ENCODE measurements at regions of chr2 and their contacts with region 1.

Region 1: DNA sequence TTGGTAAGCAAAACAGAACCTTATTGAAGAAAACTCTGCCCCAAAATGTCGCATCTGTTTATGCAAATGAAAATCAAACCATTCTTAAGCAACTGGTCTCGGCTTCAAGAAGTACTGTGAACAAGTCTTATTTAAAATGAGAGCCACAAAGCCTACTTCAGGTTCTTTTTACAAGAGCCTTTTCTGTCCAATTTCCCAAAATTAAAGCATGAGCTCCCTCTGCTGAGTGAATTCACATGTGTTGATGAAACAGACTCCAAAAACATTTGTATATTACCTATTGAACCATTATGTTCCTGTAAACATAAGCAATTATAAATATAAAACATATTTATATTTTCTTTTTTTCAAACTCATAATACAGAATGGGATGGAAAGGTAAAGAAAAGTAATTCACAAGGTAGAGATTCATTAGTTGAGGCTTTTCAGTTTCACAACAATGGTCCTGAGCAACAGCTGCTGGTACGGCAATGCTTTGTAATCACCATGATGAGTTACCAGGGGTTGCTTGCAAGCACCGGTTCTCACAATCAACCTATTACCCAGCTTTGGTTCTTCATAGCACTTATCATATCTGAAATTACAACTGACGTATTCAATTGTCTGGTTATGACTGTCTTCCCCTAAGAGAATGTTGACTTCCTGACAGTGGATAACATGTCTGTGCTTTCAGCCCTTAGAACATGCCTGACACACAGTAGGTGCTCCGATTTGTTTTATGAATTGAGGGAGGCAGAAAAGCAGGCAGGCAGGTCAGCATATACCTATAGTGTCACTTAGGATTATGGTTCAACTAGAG is 108.4 kb upstream of the BZW1 start:
- DNase-seq: peak in 1 of 4 experiments; percentile 48
- ATAC-seq: peak; percentile 63; the same call in 2 of the 3 replicates
- H3K4me3 ChIP-seq: no peak overlapping the region
- H3K27ac ChIP-seq: no peak overlapping the region
- H3K4me1 ChIP-seq: no peaks in the 10 kb centered on the region
- H3K27me3 ChIP-seq: peaks cover 3 to 4% of the 10 kb centered on the region in 2 experiments; a peak in 3 of 5 replicates
- CTCF ChIP-seq: peak; percentile 32 to 68 (median 42); a peak in 4 of 6 replicates
- EP300 ChIP-seq: no peak
- POLR2A ChIP-seq: no peak
- RAD21 ChIP-seq: peak; percentile 85 to 93

Region 2: GRCh38 chr2:199704358-199705238 is 998.7 kb before region 1 on chr2:
- CTCF ChIA-PET with region 1: interaction called, 3 read pairs
- POLR2A ChIA-PET with region 1: no interaction called
- in situ Hi-C with region 1: no loop called
- intact Hi-C with region 1: loop called (anchors 10 kb)
- DNase-seq: peak; percentile 19 to 61 (median 32)
- ATAC-seq: peak; percentile 91
- H3K4me3 ChIP-seq: no peak overlapping the region
- H3K27ac ChIP-seq: no peak overlapping the region
- H3K4me1 ChIP-seq: no peaks in the 10 kb centered on the region
- H3K27me3 ChIP-seq: no peaks in the 10 kb centered on the region
- CTCF ChIP-seq: peak; percentile 56 to 61 (median 56)
- EP300 ChIP-seq: no peak
- POLR2A ChIP-seq: no peak
- RAD21 ChIP-seq: peak; percentile 75 to 83

Region 3: DNA sequence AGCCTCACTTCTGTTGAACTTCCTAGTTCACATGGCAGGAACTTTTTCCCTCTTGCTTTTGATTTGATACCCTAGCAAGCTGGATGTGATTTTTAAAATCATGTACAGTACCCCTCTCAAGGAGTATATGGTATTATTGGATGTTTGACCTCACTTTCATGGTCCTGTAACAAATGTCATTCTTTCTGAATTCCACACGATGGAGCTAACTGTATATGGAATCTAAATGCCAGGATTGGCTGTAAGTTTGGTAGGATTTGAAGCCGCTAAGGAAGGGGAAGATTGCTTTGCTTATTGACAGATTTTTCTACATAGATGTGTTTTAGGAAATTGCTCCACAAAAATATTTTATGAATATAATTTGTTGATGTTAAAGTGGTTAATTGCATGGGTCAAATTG is 729.6 kb before region 1 on chr2:
- CTCF ChIA-PET with region 1: interaction called, 12 read pairs
- POLR2A ChIA-PET with region 1: no interaction called
- in situ Hi-C with region 1: loop called (anchors 10 kb)
- intact Hi-C with region 1: loop called (anchors 1 kb)
- DNase-seq: peak in 2 of 4 experiments; percentile 21 to 26
- ATAC-seq: peak; percentile 72
- H3K4me3 ChIP-seq: no peak overlapping the region
- H3K27ac ChIP-seq: no peak overlapping the region
- H3K4me1 ChIP-seq: no peaks in the 10 kb centered on the region
- H3K27me3 ChIP-seq: no peaks in the 10 kb centered on the region
- CTCF ChIP-seq: peak; percentile 32 to 56 (median 39); a peak in 4 of 6 replicates
- EP300 ChIP-seq: no peak
- POLR2A ChIP-seq: no peak
- RAD21 ChIP-seq: peak; percentile 72 to 78

Region 4: DNA sequence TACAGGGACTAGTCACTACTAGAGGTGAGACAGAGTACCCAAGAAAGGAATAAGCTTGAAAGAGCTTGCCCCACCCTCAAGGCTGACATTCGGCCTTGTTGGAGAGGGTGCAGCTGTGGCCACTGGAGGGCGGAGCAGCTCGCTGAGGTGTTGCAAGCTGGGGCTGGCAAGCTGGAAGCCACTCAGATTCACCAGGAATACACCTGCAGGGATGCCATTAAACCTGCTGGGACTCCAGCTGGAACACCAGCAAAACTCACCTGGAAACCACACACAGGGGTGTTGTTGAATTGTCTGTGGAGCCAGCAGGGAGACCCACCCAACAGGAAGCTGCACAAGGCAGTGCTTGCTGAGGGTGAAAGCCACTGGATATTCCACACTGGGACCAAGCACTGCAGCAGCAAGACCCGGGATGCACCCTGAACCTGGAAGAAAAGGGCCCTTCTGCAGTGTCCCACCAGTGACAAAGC is 219.6 kb before region 1 on chr2:
- CTCF ChIA-PET with region 1: interaction called, 7 read pairs
- POLR2A ChIA-PET with region 1: interaction called, 3 read pairs
- in situ Hi-C with region 1: loop called (anchors 10 kb)
- intact Hi-C with region 1: loop called (anchors 2 kb)
- DNase-seq: peak; percentile 15 to 63 (median 28)
- ATAC-seq: peak; percentile 94
- H3K4me3 ChIP-seq: no peak overlapping the region
- H3K27ac ChIP-seq: no peak overlapping the region
- H3K4me1 ChIP-seq: peaks cover 6 to 9% of the 10 kb centered on the region in 2 experiments; a peak in 4 of 5 replicates
- H3K27me3 ChIP-seq: no peaks in the 10 kb centered on the region
- CTCF ChIP-seq: peak; percentile 65 to 76 (median 71)
- EP300 ChIP-seq: no peak
- POLR2A ChIP-seq: no peak
- RAD21 ChIP-seq: peak; percentile 27 to 70; a peak in 3 of 4 replicates

Region 5: DNA sequence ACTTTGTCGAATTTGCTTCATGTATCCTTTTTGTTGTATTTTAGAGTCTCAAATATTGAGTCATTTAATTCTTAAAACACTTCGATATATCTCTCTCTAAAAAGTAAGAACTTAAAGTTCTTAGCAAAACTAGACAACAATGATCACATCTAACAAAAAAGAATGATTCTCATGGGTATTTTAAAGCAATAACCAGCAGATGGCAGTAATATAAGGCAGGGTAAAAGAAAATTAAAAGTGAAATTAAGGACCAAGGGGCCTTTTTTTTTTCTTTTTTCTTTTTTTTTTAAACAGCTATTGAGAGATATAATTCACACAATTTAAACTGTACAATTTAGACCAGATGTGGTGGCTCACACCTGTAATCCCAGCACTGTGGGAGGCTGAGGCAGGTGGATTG is 127.4 kb before region 1 on chr2:
- CTCF ChIA-PET with region 1: interaction called, 7 read pairs
- POLR2A ChIA-PET with region 1: interaction called, 4 read pairs
- in situ Hi-C with region 1: no loop called
- intact Hi-C with region 1: loop called (anchors 2 kb)
- DNase-seq: no peak
- ATAC-seq: no peak
- H3K4me3 ChIP-seq: no peak overlapping the region
- H3K27ac ChIP-seq: no peak overlapping the region
- H3K4me1 ChIP-seq: no peaks in the 10 kb centered on the region
- H3K27me3 ChIP-seq: no peaks in the 10 kb centered on the region
- CTCF ChIP-seq: peak; percentile 6 to 44 (median 13); a peak in 3 of 6 replicates
- EP300 ChIP-seq: no peak
- POLR2A ChIP-seq: no peak
- RAD21 ChIP-seq: peak in 1 of 2 experiments; percentile 30; a peak in 1 of 4 replicates

Region 6: DNA sequence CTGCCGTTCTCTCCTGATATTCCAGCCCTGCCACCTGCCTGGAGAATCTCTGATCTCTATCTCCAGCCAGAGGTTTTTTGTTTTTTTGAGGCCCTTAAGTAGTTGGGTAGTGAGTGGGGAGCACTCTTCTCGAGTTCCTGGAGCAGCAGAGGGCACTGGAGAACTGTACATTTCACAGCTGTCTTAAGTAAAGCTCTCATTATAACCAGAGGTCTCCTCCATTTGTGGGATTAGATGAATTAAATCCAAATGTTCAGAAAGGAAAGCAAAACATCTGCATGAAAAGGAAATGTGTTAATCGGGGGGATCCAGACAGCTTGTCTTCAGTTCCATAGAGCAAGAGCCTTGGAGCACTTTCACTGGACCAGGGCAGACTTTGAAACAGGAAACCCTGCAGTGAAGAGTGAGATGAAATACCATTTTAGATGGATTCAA is 84.7 kb before region 1 on chr2:
- CTCF ChIA-PET with region 1: interaction called, 3 read pairs
- POLR2A ChIA-PET with region 1: interaction called, 3 read pairs
- in situ Hi-C with region 1: no loop called
- intact Hi-C with region 1: loop called (anchors 1 kb)
- DNase-seq: peak in 2 of 4 experiments; percentile 23 to 30
- ATAC-seq: peak; percentile 84
- H3K4me3 ChIP-seq: no peak overlapping the region
- H3K27ac ChIP-seq: no peak overlapping the region
- H3K4me1 ChIP-seq: peaks cover 0 to 5% of the 10 kb centered on the region in 2 experiments; a peak in 2 of 5 replicates
- H3K27me3 ChIP-seq: peaks cover 0 to 4% of the 10 kb centered on the region in 2 experiments; a peak in 1 of 5 replicates
- CTCF ChIP-seq: peak; percentile 25 to 45 (median 30); a peak in 3 of 6 replicates
- EP300 ChIP-seq: no peak
- POLR2A ChIP-seq: no peak
- RAD21 ChIP-seq: peak; percentile 50 to 70; a peak in 3 of 4 replicates

Region 7: GRCh38 chr2:200864176-200864976 is 161.1 kb after region 1 on chr2 and contains the start of gene CLK1:
- CTCF ChIA-PET with region 1: no interaction called
- POLR2A ChIA-PET with region 1: no interaction called
- in situ Hi-C with region 1: no loop called
- intact Hi-C with region 1: no loop called
- DNase-seq: peak; percentile 77 to 94 (median 81)
- ATAC-seq: peak; percentile 88
- H3K4me3 ChIP-seq: peak within 1 kb of the TSS; percentile 73
- H3K27ac ChIP-seq: peak within 1 kb of the TSS; percentile 98
- H3K4me1 ChIP-seq: peaks cover 9 to 15% of the 10 kb centered on the region in 2 experiments; a peak in 4 of 5 replicates
- H3K27me3 ChIP-seq: no peaks in the 10 kb centered on the region
- CTCF ChIP-seq: no peak
- EP300 ChIP-seq: peak; percentile 38; the same call in 1 of the 2 replicates
- POLR2A ChIP-seq: peak; percentile 97
- RAD21 ChIP-seq: no peak
- polyA plus RNA-seq, gene CLK1: 49.3 to 50.7 TPM

Measured in K562 (cell line).